Cardiac septum (tissue), 1 donor: ENCODE measurements at regions of chr17 and their contacts with region 1.

Region 1: DNA sequence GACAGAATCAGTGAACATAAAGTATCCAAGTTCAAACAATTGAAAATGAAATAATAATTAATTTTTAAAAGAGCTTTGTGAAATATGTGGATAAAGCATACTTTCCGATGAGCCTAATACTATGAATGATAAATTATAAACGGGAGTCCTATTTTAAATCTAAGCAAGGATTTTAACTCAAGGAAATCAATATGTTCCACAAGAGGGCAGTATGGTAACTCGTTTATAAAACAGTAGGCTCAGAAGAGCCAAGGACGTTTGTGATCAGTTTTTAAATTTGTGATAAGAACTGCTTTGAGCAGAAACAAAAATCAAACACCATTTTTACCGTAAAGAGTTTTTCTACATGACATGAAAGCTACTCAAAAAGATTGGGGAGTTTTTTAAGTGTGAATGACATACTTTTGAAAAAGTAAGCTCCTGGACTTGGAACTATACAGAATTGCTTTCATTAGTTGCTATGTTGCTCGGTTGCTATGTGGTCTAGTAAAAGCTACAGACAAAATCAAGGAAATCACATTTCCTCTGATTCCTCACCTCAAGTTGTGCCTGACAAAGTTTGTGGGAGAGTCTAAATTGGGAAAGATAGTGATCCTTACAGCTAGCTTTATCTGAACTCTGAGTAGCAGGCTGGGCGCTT is 11.8 kb upstream of the TEKT1 start:
- DNase-seq: no peak

Region 2: GRCh38 chr17:6761779-6762178 is 81.6 kb before region 1 on chr17:
- intact Hi-C with region 1: no loop called
- DNase-seq: no peak

Region 3: GRCh38 chr17:7004398-7005253 is 161.3 kb after region 1 on chr17:
- intact Hi-C with region 1: loop called (anchors 10 kb)
- DNase-seq: no peak